ENCODE measurements at regions of chrX and their contacts with region 1.

Region 1: DNA sequence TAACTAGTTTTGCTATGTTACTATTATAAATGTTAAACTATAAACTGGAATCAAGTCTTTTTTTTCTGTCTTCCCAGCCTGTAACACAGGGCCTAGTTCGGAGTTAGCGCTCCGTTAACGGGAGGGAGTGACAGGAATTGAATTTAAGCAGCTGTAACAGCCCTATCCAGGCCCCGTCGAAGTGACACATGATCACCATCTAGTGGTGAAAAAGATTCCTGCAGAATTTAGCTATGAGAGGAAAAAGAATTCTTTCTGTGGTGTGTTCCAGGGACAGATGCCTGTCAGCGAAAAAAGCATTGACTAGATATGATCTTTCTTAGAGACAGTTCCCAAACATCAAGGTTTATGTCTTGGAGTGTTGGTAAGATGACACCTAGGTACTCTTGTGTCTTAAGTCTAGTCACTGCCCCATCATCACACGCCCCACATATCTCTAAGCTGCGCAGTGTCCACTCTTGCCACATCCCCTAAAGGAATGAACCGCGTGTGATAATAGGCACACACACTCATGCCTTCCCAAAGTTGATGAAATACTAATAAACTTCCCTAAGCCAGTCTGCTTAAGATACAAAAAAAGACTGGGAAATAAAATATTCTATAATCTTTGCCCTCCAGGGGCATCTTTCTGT is 2.0 kb downstream of the GAB3 start:
- DNase-seq: peak in 1 of 2 donors; percentile 55
- ATAC-seq: peak; percentile 48 to 83 (median 70)
- H3K4me3 ChIP-seq: peak overlapping the region in 8 of 10 donors; percentile 38 to 74 (median 68)
- H3K27ac ChIP-seq: peak overlapping the region in 8 of 10 donors; percentile 59 to 95 (median 91)
- H3K4me1 ChIP-seq: peaks cover 0 to 30% (median 14%) of the 10 kb centered on the region in 9 donors
- H3K27me3 ChIP-seq: peaks cover 0 to 10% (median 0%) of the 10 kb centered on the region in 7 donors
- CTCF ChIP-seq: peak; percentile 63 to 82 (median 76)

Region 2: DNA sequence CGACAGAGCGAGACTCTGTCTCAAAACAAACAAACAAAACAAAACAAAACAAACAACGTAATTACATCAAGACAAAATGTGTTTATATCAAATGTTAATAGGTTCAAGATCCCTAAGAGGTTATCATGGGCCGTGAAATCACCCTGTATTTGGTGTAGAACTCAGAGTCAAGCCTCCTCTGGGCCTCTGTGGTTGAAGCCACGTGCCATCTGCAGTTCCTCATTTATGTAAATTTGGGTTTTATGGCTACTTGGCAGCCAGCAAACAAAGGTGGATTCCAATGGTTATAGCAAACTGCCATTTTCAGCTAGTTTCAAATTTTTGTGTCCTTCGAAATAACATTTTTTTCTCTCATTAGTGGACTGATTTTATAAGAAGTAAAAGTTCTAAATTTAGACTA is 1901.5 kb before region 1 on chrX:
- intact Hi-C with region 1: no loop called
- DNase-seq: no peak
- ATAC-seq: no peak
- H3K4me3 ChIP-seq: no peak overlapping the region
- H3K27ac ChIP-seq: no peak overlapping the region
- H3K4me1 ChIP-seq: peaks cover 0 to 7% (median 0%) of the 10 kb centered on the region in 9 donors
- H3K27me3 ChIP-seq: no peaks in the 10 kb centered on the region
- CTCF ChIP-seq: no peak

Region 3: DNA sequence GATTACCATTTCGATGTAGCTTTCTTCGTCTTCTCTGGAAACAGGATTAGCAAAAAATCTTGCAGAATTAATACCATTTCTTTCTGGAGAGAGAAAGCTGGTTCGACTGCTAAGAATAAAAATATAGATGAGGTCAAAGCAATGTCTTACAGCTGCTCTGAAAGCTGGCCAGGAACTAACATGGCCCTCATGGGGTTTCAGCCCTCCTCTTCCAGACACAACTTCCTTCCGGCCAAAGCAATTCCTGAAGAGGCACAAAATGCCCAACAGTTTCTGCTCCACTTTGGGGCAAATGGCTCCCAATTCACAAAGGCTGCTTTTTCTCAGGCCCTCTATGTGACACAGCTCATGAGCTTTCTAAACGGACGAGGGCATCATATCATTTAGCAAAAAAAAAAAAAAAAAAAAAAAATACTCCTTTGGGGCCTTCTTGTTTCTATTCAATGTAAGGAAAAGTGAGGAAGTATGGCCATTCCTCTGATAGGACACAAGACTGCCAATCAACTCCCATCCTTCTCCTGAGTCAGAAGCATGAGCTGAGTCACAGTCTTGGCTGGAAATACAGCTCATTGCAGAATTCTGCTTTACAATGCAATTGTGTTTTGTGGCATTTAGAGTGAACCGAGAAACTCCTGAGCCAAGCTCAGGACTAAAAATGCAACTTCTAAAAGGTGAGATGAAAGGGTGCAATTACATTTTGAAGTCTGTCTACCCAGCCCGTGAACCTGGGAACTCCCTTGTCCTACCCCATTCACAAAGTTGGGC is 52.7 kb before region 1 on chrX:
- intact Hi-C with region 1: loop called in 2 of 10 experiments (anchors 10 kb)
- DNase-seq: peak in 1 of 2 donors; percentile 18
- ATAC-seq: peak in 7 of 8 donors; percentile 53 to 75 (median 56)
- H3K4me3 ChIP-seq: no peak overlapping the region
- H3K27ac ChIP-seq: peak overlapping the region in 8 of 10 donors; percentile 13 to 75 (median 54)
- H3K4me1 ChIP-seq: peaks cover 0 to 39% (median 19%) of the 10 kb centered on the region in 9 donors
- H3K27me3 ChIP-seq: no peaks in the 10 kb centered on the region
- CTCF ChIP-seq: no peak

Region 4: DNA sequence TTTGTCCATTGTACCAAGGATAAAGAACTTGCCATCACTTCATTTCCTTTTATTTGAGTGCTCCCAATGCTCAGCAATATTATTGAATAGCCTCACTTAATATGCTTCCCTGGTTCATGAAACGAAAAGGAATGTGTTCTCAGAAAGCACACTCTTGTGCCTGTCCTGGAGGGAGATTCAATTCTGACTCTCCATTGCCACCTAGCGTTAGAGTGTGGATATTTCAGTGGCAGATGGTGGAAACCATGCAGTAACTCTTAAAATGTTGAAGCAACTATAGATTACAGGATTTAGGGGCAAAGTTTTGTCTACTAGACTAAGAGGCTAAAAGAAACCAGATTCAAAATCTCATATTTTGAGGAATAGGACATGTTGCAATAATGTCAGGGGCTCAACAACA is 33.9 kb before region 1 on chrX:
- intact Hi-C with region 1: loop called in 5 of 10 experiments (anchors 2 to 5 kb)
- DNase-seq: peak in 1 of 2 donors; percentile 46
- ATAC-seq: peak; percentile 42 to 78 (median 72)
- H3K4me3 ChIP-seq: no peak overlapping the region
- H3K27ac ChIP-seq: peak overlapping the region in 1 of 10 donors; percentile 44
- H3K4me1 ChIP-seq: peaks cover 0 to 76% (median 51%) of the 10 kb centered on the region in 9 donors
- H3K27me3 ChIP-seq: no peaks in the 10 kb centered on the region
- CTCF ChIP-seq: peak; percentile 30 to 83 (median 66)

Region 5: DNA sequence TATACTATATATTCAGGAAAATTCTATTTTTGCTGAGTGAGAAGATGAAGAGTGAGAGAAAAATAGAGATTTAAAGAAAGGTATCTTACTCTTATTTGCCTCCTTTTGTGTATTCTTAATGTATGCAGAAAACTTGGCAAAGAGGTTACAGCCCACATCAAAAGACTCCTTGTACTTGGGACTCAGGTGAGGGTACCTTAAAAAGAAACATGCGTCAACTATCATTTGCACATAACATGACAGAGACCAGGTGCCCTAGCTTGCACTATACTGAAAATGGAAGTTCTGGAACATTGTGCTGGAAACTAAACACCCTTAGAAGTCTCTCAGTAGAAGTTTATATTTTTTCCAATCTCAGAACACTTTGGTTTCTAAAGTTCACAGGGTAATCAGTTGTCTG is 531.0 kb after region 1 on chrX:
- intact Hi-C with region 1: no loop called
- DNase-seq: no peak
- ATAC-seq: no peak
- H3K4me3 ChIP-seq: no peak overlapping the region
- H3K27ac ChIP-seq: no peak overlapping the region
- H3K4me1 ChIP-seq: no peaks in the 10 kb centered on the region
- H3K27me3 ChIP-seq: no peaks in the 10 kb centered on the region
- CTCF ChIP-seq: no peak

Region 6: DNA sequence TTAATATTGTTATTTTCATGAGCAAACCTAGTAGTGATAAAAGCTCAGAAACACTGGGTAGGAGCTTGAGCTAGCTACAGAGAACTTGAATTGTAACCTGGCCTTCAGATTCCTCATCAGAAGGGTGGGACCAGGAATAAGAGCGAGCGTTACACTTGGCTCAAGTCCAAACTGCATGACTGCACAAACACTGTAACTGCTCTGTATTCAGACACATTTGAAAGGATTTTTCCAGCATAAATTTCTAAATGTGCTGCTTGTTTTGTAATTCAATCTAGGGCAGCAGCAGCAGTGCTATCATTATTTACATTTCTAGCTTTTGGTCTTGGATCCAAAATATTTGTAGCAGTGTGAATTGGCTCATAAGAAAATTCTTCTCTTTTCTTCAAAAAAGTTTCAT is 997.0 kb after region 1 on chrX:
- intact Hi-C with region 1: no loop called
- DNase-seq: peak in 1 of 2 donors; percentile 23
- ATAC-seq: peak in 5 of 8 donors; percentile 41 to 70 (median 50)
- H3K4me3 ChIP-seq: no peak overlapping the region
- H3K27ac ChIP-seq: no peak overlapping the region
- H3K4me1 ChIP-seq: peaks cover 0 to 44% (median 19%) of the 10 kb centered on the region in 9 donors
- H3K27me3 ChIP-seq: no peaks in the 10 kb centered on the region
- CTCF ChIP-seq: no peak

Region 7: DNA sequence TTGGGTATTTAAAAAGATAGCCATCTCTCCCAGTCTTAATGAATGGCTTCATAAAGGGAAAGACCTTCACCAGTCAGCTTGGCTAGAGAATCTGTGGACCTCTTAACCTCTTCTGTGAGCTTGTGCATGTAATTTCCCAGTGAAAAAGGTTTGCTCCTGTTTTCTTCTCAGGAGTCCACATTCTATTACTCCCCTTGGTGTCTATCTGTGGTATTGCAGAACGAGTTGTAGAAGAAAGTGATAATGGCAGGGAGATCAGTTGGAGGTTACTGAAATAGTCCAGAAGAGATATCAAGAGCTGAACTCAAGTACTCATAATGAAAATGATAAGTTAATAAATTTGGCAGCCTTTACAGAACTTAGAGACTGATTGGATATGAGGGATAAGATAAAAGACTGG is 1115.8 kb after region 1 on chrX:
- intact Hi-C with region 1: no loop called
- DNase-seq: no peak
- ATAC-seq: no peak
- H3K4me3 ChIP-seq: no peak overlapping the region
- H3K27ac ChIP-seq: no peak overlapping the region
- H3K4me1 ChIP-seq: no peaks in the 10 kb centered on the region
- H3K27me3 ChIP-seq: peaks cover 0 to 20% (median 0%) of the 10 kb centered on the region in 7 donors
- CTCF ChIP-seq: peak in 3 of 9 donors; percentile 9 to 25 (median 17)

Measured in heart right ventricle (tissue), 16 donors.